AG04450 (cell line): ENCODE measurements at regions of chrX and their contacts with region 1.

Region 1: DNA sequence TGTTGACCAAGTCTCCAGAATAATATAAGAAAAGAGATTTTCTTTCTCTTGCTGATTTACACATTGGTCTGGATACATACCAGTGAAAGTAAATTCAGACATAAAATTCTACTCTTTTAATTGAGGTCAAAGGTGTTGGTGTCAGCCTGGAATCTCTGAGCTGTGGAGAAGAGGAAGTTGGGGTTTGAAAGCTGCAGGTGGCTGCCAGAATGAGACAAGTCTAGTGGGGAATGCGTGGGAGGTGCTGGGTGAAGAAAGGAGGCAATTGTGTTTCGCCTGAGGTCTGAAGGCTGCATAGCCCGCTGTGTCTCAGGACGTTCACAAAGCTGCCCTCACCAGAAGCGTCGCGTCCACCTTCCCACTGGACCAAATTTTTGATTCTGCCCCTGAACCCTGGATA is 31.2 kb downstream of the PHEX start:
- DNase-seq: no peak
- H3K4me3 ChIP-seq: no peak overlapping the region
- H3K27ac ChIP-seq: no peak overlapping the region
- H3K27me3 ChIP-seq: no peaks in the 10 kb centered on the region
- CTCF ChIP-seq: no peak

Region 2: GRCh38 chrX:21993265-21993664 is 70.0 kb before region 1 on chrX:
- CTCF ChIA-PET with region 1: no interaction called
- POLR2A ChIA-PET with region 1: no interaction called
- DNase-seq: no peak
- H3K4me3 ChIP-seq: no peak overlapping the region
- H3K27ac ChIP-seq: no peak overlapping the region
- H3K27me3 ChIP-seq: no peaks in the 10 kb centered on the region
- CTCF ChIP-seq: no peak

Region 3: GRCh38 chrX:22041907-22042530 is 21.3 kb before region 1 on chrX:
- CTCF ChIA-PET with region 1: interaction called, 13 read pairs
- POLR2A ChIA-PET with region 1: no interaction called
- DNase-seq: no peak
- H3K4me3 ChIP-seq: no peak overlapping the region
- H3K27ac ChIP-seq: no peak overlapping the region
- H3K27me3 ChIP-seq: no peaks in the 10 kb centered on the region
- CTCF ChIP-seq: no peak

Region 4: DNA sequence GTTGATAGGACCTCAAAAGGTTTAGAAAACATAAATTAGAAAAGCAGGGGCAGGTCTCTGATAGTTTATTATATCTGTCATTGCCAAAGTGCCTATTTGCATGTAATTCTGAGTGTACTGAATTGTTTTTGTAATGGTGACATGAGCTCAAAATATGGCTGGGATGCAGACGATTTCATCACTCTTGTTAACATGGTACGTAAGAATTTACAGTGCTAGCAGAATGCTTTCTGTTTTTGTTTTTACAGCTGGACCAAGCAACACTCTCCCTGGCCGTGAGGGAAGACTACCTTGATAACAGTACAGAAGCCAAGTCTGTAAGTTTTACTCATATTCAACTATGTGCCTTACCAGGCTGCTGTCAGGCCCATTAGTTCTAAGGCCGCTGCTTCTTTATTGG is 26.9 kb after region 1 on chrX:
- CTCF ChIA-PET with region 1: no interaction called
- POLR2A ChIA-PET with region 1: no interaction called
- DNase-seq: peak; percentile 36
- H3K4me3 ChIP-seq: no peak overlapping the region
- H3K27ac ChIP-seq: peak overlapping the region; percentile 12
- H3K27me3 ChIP-seq: no peaks in the 10 kb centered on the region
- CTCF ChIP-seq: no peak